KBM-7 (cell line): ENCODE measurements at regions of chr4 and their contacts with region 1.

Region 1: DNA sequence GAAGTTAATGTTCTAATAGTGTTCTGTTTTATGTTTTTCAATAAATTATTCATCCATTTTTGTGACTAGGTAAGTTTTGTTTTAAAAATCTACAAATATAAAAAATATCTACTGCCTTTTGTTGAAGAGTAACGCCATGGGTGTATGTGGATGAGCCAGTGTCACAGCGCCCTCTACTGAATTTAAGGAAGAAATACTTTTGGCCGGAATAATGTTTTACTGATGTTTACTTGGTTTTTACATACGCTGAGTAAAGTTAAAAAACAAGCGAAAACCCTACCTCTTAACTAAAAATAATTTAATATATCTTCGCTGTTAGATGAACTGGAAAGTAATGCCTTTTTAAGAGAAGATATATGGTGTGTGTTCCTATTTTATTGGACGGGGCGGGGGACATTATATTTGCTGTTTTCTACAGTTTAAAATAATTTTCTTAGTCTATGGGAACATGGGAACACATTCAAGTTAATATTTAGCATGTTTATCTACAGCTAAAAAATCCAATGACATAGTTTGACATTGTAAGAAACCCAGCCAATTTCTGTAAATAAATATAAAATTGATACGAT is 86.1 kb downstream of the CPE start:
- DNase-seq: peak; percentile 43

Region 2: DNA sequence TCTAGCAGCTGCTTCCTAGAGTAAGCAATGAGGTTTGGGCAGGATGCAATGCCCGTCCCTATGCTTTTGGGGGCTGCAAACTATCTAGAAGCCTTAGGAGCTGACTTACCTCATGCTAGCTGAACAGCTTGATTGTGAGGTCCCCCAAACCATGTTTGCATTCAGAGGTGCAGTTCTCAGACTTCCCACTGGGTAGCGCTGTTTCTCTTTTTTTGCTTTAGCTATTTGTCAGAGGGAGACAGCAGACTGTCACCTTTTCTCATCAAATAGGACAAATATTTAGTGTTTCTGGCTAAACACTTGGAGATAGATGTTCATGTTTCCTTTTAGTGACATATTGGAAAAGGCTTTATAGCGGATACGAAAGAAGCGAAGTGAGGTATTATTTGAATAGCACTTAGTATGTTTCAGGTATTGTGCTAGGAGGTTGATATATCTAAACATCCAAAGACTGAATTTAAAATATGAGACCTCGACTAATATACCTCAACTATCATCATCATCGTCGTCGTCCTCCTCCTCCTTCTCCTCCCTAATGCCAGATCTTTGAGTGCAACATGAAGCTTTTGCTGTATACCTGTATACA is 333.6 kb before region 1 on chr4:
- in situ Hi-C with region 1: loop called (anchors 25 kb)
- DNase-seq: peak; percentile 85

Region 3: DNA sequence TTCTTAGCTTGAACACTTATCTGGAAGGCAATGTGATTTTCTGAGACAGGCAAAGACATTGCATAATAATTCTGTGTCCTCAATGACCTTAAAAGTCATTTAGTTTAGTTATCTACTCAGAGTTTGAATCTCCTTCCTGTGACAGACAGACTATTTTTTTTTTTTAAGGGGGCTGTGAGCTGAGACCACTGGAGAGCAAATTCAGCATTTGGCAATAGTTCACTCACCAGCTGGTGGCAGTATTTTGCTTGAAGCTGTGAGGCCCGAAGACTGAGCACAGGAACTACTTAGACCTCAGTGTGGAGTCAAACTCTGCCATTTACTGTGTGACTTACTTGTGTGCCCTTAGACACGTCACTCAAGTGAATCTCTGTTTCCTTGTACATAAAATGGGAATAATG is 109.0 kb before region 1 on chr4:
- in situ Hi-C with region 1: loop called (anchors 25 kb)
- DNase-seq: peak; percentile 44